ENCODE measurements at regions of chr15 and their contacts with region 1.

Region 1: GRCh38 chr15:83248151-83249029 is 36.1 kb downstream of the BNC1 start:
- DNase-seq: peak; percentile 34 to 55
- H3K4me3 ChIP-seq: no peak overlapping the region
- H3K27ac ChIP-seq: peak overlapping the region; percentile 7; the same call in 1 of the 2 replicates
- H3K4me1 ChIP-seq: peaks cover 17% of the 10 kb centered on the region
- H3K27me3 ChIP-seq: no peaks in the 10 kb centered on the region
- CTCF ChIP-seq: peak; percentile 98

Region 2: DNA sequence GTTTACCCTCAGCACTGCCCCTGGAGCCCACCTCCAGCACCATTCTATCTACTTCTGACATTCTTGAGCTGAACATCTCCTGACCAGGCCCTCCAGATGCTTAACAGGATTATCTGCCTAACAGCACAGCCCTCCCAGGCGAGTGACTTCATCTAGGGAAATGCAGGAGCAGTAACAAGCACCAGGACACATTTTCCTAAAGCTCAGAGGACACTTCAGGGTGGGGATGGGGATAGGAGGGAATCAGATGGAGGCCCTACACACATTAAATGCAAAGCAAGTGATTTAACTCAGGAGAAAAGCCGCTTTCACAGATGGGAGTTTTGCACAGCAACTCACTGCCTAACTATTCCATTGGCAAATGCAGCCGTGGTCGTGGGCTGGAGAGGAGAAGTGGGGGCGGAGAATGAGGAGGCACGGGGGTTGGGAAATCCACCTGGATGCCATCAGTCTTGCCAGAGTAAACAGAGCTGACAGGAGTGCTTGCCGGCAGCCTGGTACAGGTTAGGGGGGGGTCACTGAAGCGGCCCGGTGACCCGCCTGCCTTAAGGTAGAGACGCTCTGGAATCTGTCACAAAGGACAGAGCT is 57.4 kb after region 1 on chr15:
- CTCF ChIA-PET with region 1: interaction called, 4 read pairs
- POLR2A ChIA-PET with region 1: no interaction called
- intact Hi-C with region 1: loop called (anchors 2 kb)
- DNase-seq: peak; percentile 81 to 89
- H3K4me3 ChIP-seq: peak overlapping the region; percentile 41; the same call in 1 of the 2 replicates
- H3K27ac ChIP-seq: peak overlapping the region; percentile 98
- H3K4me1 ChIP-seq: peaks cover 63% of the 10 kb centered on the region
- H3K27me3 ChIP-seq: no peaks in the 10 kb centered on the region
- CTCF ChIP-seq: no peak

Region 3: DNA sequence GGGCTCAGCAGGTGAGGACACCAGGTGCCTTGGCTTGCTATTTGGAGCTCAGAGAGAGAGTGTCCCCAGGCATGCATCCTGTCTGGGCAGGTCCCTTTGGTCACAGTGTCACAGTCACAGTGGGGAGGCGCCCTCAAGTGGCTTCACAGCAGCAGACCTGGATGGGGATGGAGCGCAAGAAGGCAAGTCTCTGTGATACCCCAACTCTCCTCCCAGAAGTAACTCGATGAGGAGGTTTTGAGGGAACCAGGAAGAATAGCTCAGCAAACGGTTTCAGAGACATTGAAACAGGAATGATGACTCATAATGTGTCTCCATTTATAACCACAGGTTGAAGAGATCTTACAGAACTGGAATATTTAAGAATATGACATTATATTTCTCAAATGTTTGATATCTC is 132.3 kb after region 1 on chr15:
- CTCF ChIA-PET with region 1: interaction called, 40 read pairs
- POLR2A ChIA-PET with region 1: interaction called, 11 read pairs
- intact Hi-C with region 1: loop called (anchors 2 kb)
- DNase-seq: peak; percentile 82 to 88
- H3K4me3 ChIP-seq: no peak overlapping the region
- H3K27ac ChIP-seq: peak overlapping the region; percentile 95
- H3K4me1 ChIP-seq: peaks cover 53% of the 10 kb centered on the region
- H3K27me3 ChIP-seq: no peaks in the 10 kb centered on the region
- CTCF ChIP-seq: peak; percentile 73

Region 4: GRCh38 chr15:83559310-83559966 is 311.0 kb after region 1 on chr15:
- CTCF ChIA-PET with region 1: interaction called, 4 read pairs
- POLR2A ChIA-PET with region 1: no interaction called
- intact Hi-C with region 1: loop called (anchors 1 kb)
- DNase-seq: peak; percentile 47 to 49
- H3K4me3 ChIP-seq: no peak overlapping the region
- H3K27ac ChIP-seq: no peak overlapping the region
- H3K4me1 ChIP-seq: no peaks in the 10 kb centered on the region
- H3K27me3 ChIP-seq: no peaks in the 10 kb centered on the region
- CTCF ChIP-seq: peak; percentile 88

Region 5: GRCh38 chr15:83747050-83747717 is 498.8 kb after region 1 on chr15:
- CTCF ChIA-PET with region 1: no interaction called
- POLR2A ChIA-PET with region 1: no interaction called
- intact Hi-C with region 1: loop called (anchors 5 kb)
- DNase-seq: peak in 1 of 2 experiments; percentile 27
- H3K4me3 ChIP-seq: no peak overlapping the region
- H3K27ac ChIP-seq: no peak overlapping the region
- H3K4me1 ChIP-seq: peaks cover 5% of the 10 kb centered on the region; the same call in 1 of the 2 replicates
- H3K27me3 ChIP-seq: no peaks in the 10 kb centered on the region
- CTCF ChIP-seq: peak; percentile 51

Region 6: DNA sequence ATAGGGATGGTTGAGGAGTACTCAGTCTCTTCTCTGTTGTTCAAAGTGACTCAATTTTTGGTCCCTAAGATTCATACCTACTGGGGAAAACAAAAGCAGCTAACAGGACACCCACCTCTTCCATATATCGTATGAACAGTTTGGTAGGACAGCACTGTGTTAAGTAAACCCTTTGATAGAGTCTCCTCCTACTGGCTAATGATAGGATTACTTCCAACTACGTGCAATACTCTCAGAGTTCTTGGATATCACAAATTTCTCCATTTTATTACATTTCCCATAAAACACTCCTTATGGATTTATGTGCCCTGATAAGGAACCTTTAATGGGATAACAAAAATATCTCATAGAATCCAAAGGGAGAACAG is 787.0 kb after region 1 on chr15:
- CTCF ChIA-PET with region 1: no interaction called
- POLR2A ChIA-PET with region 1: no interaction called
- intact Hi-C with region 1: loop called (anchors 10 kb)
- DNase-seq: no peak
- H3K4me3 ChIP-seq: no peak overlapping the region
- H3K27ac ChIP-seq: no peak overlapping the region
- H3K4me1 ChIP-seq: no peaks in the 10 kb centered on the region
- H3K27me3 ChIP-seq: no peaks in the 10 kb centered on the region
- CTCF ChIP-seq: peak; percentile 47

Measured in PC-9 (cell line).